ENCODE measurements at regions of chr20 and their contacts with region 1.

Region 1: GRCh38 chr20:36199345-36200257 is 36.7 kb upstream of the AAR2 start:
- DNase-seq: peak; percentile 64 to 79 (median 74)
- ATAC-seq: peak in 3 of 4 donors; percentile 73 to 82 (median 74)
- H3K4me3 ChIP-seq: no peak overlapping the region
- H3K27ac ChIP-seq: no peak overlapping the region
- H3K4me1 ChIP-seq: peaks cover 0 to 6% (median 0%) of the 10 kb centered on the region in 12 donors
- H3K27me3 ChIP-seq: no peaks in the 10 kb centered on the region
- CTCF ChIP-seq: peak; percentile 84 to 96 (median 90)
- POLR2A ChIP-seq: no peak

Region 2: DNA sequence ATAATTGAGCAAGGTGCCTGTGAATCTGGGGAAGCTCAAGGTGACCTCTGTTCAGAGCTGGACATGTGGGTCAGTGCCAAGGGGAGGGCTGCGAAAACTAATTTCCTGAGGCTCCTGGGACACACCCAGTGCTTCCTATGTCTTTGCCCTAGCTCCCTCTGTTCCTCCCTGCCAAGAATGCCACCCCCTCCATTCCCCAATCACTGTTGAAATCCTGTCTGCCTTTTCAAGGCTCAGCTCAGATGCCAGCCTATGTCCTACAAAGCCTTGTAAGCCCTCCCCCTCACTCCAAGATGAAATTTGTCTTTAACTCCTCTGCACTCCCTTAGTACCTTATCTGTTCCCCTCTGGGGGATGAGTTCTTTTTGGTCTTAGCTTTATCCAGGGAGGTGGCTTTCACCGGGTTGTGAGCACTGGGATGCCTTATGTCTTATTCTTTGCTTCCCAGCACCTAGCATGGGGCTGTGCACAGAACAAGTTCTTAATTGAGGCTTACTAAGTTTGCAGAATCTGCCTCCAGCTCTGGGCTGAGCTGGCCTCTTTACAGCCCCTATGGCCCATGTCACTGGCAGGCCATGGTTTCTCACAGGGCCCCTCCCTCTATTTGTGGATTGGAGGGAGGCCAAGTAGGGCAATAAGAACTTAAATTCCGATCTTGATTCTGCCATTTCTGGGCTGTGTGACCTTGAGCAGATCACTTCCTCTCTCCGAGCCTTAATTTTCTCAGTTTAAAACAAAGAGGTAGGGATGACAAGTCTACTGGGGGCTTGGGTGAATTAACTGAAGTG is 96.6 kb before region 1 on chr20:
- intact Hi-C with region 1: no loop called
- DNase-seq: no peak
- ATAC-seq: no peak
- H3K4me3 ChIP-seq: no peak overlapping the region
- H3K27ac ChIP-seq: no peak overlapping the region
- H3K4me1 ChIP-seq: peaks cover 0 to 25% (median 12%) of the 10 kb centered on the region in 12 donors
- H3K27me3 ChIP-seq: no peaks in the 10 kb centered on the region
- CTCF ChIP-seq: no peak
- POLR2A ChIP-seq: no peak

Region 3: DNA sequence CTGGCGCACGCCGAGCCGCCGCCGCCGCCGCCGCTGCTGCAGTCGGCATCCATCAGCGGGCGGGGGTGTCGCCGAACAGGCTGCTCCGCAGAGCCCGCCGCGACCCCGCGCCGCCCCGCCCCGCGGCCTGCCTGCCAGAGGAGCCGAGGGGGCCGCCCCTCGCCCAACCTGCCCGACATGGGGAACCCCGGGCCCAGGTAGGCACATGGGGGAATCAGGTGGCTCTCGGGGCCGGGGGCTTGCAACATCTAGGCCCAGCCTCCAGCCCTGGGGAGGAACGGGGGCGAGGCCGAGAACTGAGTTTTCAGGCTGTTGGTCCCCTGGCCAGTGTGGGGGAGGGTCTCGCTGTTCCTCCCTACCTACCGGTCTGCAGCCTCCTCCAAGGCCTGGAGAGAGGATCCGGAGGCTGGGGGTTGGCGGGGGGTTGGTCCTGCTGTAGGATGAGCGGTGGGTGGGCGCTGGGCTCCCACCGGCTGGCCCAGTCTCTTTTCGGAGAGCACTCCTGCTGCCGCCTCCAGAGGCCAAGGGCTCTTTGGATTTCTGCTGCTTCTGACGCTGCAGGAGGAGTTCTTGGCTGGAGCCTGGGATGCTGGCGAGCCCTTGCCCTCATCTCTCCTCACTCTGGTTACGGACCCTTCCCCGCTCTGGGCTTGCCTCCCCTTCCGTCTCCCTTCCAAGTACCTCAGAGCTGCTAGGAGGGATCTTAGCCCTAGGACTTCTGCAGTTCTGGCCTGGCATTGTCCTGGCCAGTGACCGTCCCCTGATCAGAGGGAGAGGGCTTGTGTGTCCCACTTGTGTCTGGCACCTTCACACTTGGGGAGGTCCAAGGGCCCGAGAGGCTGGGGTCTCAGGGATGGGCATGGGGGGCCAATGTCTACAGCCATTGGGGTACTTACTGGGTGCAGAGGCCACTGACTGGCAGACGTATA is 44.6 kb before region 1 on chr20 and contains the start of gene EPB41L1:
- intact Hi-C with region 1: loop called (anchors 1 to 5 kb)
- DNase-seq: peak in 4 of 5 donors; percentile 20 to 57 (median 41)
- ATAC-seq: peak in 2 of 4 donors; percentile 1 to 2
- H3K4me3 ChIP-seq: peak within 1 kb of the TSS; percentile 54 to 90 (median 66)
- H3K27ac ChIP-seq: peak within 1 kb of the TSS; percentile 3 to 87 (median 70)
- H3K4me1 ChIP-seq: peaks cover 0 to 48% (median 18%) of the 10 kb centered on the region in 12 donors
- H3K27me3 ChIP-seq: peaks cover 0 to 10% (median 0%) of the 10 kb centered on the region in 9 donors
- CTCF ChIP-seq: no peak
- POLR2A ChIP-seq: no peak
- total RNA-seq, gene EPB41L1: 10.5 to 29.8 (median 19.0) TPM

Region 4: GRCh38 chr20:36439040-36439730 is 239.6 kb after region 1 on chr20:
- intact Hi-C with region 1: loop called in 6 of 10 experiments (anchors 1 to 5 kb)
- DNase-seq: peak; percentile 37 to 80 (median 53)
- ATAC-seq: peak in 3 of 4 donors; percentile 59 to 72 (median 63)
- H3K4me3 ChIP-seq: no peak overlapping the region
- H3K27ac ChIP-seq: no peak overlapping the region
- H3K4me1 ChIP-seq: peaks cover 0 to 8% (median 0%) of the 10 kb centered on the region in 12 donors
- H3K27me3 ChIP-seq: peaks cover 0 to 16% (median 3%) of the 10 kb centered on the region in 9 donors
- CTCF ChIP-seq: peak; percentile 75 to 90 (median 82)
- POLR2A ChIP-seq: no peak

Region 5: GRCh38 chr20:36591854-36592641 is 392.4 kb after region 1 on chr20:
- intact Hi-C with region 1: loop called in 1 of 10 experiments (anchors 10 kb)
- DNase-seq: peak in 1 of 5 donors; percentile 35
- ATAC-seq: peak in 3 of 4 donors; percentile 51 to 61 (median 52)
- H3K4me3 ChIP-seq: no peak overlapping the region
- H3K27ac ChIP-seq: no peak overlapping the region
- H3K4me1 ChIP-seq: peaks cover 0 to 44% (median 0%) of the 10 kb centered on the region in 12 donors
- H3K27me3 ChIP-seq: no peaks in the 10 kb centered on the region
- CTCF ChIP-seq: peak; percentile 20 to 62 (median 46)
- POLR2A ChIP-seq: no peak

Region 6: DNA sequence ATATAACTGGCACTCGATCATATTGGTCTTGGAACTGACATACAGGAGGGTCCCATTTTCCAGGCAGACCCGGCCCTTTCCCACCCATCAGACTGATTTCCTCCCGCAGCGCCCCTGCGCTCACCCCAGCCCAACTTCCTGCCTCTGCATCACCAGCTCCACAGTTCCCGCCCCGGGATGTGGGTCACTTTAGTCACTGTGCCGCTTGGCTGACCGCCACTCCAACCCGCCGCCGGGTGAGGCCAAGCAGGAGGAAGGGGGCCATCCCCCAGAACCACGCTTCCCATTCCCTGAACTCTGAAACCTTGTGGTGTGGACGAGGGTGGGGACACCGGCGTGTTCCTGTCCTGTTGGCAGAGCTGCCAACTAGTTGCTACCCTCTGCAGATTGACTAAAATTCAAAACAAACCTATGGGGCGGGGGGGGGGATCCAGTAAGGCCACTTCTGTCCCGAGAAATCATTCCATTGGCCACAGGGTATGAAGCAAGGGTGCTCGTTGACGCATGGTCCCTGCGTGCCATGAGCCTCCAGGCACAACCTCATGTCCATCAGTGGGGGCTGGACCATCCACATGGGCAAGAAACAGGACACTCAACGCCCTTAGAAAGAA is 1953.1 kb after region 1 on chr20:
- intact Hi-C with region 1: no loop called
- DNase-seq: peak; percentile 88 to 94 (median 93)
- ATAC-seq: peak; percentile 39 to 81 (median 69)
- H3K4me3 ChIP-seq: peak overlapping the region in 5 of 12 donors; percentile 0 to 16 (median 12)
- H3K27ac ChIP-seq: peak overlapping the region; percentile 60 to 96 (median 90)
- H3K4me1 ChIP-seq: peaks cover 8 to 88% (median 62%) of the 10 kb centered on the region in 12 donors
- H3K27me3 ChIP-seq: no peaks in the 10 kb centered on the region
- CTCF ChIP-seq: no peak
- POLR2A ChIP-seq: no peak